PC-3 (cell line): ENCODE measurements at regions of chr17 and their contacts with region 1.

Region 1: DNA sequence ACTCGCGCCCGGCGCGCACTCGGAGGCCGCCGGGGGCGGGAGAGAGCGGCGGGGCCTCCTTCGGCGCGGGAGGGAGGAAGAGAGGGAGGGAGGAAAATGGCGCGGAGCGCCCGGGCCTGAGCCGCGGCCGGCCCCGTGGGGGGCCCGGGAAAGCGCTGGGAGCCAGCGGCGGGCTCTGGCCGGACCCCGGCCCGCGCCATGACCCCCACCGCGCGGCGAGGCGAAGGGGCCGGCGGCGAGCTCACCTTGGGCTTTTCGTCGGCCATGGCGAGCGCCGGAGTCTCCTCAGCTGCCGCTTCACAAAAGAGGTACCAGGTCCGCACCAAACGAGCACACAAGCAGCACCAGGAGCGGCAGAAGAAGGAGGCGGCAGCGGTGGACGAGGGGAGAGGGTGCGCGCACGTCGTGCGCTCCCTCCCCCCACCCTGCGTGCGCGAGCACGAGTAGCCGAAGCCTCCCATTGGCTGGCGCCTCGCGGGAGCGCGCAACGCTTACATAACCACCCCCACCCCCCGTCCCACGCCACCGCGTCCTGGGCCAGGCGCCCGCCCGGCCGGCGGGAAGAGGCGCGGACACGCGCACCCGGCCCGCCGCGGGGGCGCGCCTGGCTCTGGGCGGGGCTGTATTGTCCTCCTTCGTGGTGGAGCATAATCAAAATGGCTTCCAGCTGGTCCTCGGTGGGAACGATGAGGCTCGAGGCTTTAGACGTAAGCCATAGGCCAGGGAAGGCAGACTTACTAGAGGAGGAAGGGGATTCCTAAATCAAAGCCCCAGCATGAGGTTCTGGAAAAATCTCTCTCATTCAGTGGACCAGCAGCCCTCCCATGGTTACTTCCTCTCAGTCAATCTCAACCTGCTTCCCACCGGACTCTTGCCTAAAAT is at the start of gene SUMO2:
- DNase-seq: peak; percentile 99
- ATAC-seq: peak; percentile 89
- H3K4me3 ChIP-seq: peak within 1 kb of the TSS; percentile 97
- H3K27ac ChIP-seq: peak within 1 kb of the TSS; percentile 83
- H3K4me1 ChIP-seq: peaks cover 25% of the 10 kb centered on the region
- H3K27me3 ChIP-seq: no peaks in the 10 kb centered on the region
- CTCF ChIP-seq: no peak
- total RNA-seq, gene SUMO2: 244 and 282 TPM in 2 replicates

Region 2: GRCh38 chr17:74950207-74950606 is 232.6 kb before region 1 on chr17:
- CTCF ChIA-PET with region 1: no interaction called
- POLR2A ChIA-PET with region 1: no interaction called
- intact Hi-C with region 1: no loop called
- DNase-seq: peak; percentile 33
- ATAC-seq: peak; percentile 45
- H3K4me3 ChIP-seq: no peak overlapping the region
- H3K27ac ChIP-seq: no peak overlapping the region
- H3K4me1 ChIP-seq: peaks cover 10% of the 10 kb centered on the region; the same call in 1 of the 2 replicates
- H3K27me3 ChIP-seq: no peaks in the 10 kb centered on the region
- CTCF ChIP-seq: no peak

Region 3: GRCh38 chr17:75144816-75145512 is 37.8 kb before region 1 on chr17:
- CTCF ChIA-PET with region 1: no interaction called
- POLR2A ChIA-PET with region 1: interaction called, 12 read pairs
- intact Hi-C with region 1: no loop called
- DNase-seq: no peak
- ATAC-seq: no peak
- H3K4me3 ChIP-seq: no peak overlapping the region
- H3K27ac ChIP-seq: no peak overlapping the region
- H3K4me1 ChIP-seq: peaks cover 4% of the 10 kb centered on the region; the same call in 1 of the 2 replicates
- H3K27me3 ChIP-seq: no peaks in the 10 kb centered on the region
- CTCF ChIP-seq: no peak